Ovary (tissue), 10 donors: ENCODE measurements at regions of chr10 and their contacts with region 1.

Region 1: DNA sequence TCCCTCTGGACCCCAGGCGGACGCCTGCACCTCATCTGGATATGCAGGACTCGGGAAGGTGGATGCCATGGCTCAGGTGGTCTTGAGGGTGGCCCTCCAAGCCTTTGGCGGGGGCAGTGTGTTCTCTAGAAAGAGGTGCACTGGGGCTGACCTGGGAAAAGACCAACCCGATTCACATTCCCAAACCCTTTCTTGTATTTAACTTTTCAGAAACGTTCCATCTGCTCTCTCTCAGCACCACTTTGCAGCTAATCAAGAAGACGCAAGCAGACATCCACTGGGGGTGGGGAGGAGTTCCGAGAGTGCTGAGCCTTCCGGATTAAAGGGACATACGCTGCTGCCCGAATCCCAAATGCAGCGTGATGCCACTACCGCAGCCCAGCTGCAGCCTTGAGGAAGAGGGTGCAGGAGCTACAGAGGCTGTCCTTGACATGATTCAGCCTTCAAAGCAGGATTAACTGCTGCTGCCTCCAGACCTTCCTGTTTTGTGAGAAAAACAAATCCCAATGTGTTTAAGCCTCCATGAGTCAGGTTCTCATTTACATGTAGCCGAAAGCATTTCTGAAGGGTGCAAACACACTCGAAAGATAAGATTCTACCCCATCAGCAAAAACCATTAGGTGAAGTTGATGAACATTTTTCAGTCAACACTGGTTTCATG is 39.9 kb downstream of the RBM17 start:
- DNase-seq: peak; percentile 53 to 66 (median 62)
- H3K4me3 ChIP-seq: no peak overlapping the region
- H3K27ac ChIP-seq: peak overlapping the region in 1 of 2 donors; percentile 67
- H3K4me1 ChIP-seq: peaks cover 12% of the 10 kb centered on the region
- H3K27me3 ChIP-seq: no peaks in the 10 kb centered on the region
- CTCF ChIP-seq: no peak
- EP300 ChIP-seq: no peak
- POLR2A ChIP-seq: no peak

Region 2: GRCh38 chr10:5960070-5960972 is 168.4 kb before region 1 on chr10:
- intact Hi-C with region 1: no loop called
- DNase-seq: peak in 4 of 5 donors; percentile 4 to 17 (median 13)
- H3K4me3 ChIP-seq: no peak overlapping the region
- H3K27ac ChIP-seq: no peak overlapping the region
- H3K4me1 ChIP-seq: no peaks in the 10 kb centered on the region
- H3K27me3 ChIP-seq: no peaks in the 10 kb centered on the region
- CTCF ChIP-seq: no peak
- EP300 ChIP-seq: no peak
- POLR2A ChIP-seq: no peak

Region 3: GRCh38 chr10:6108603-6109443 is 19.9 kb before region 1 on chr10:
- intact Hi-C with region 1: loop called in 1 of 4 experiments (anchors 1 kb)
- DNase-seq: no peak
- H3K4me3 ChIP-seq: no peak overlapping the region
- H3K27ac ChIP-seq: no peak overlapping the region
- H3K4me1 ChIP-seq: no peaks in the 10 kb centered on the region
- H3K27me3 ChIP-seq: no peaks in the 10 kb centered on the region
- CTCF ChIP-seq: peak; percentile 57 to 79 (median 78)
- EP300 ChIP-seq: no peak
- POLR2A ChIP-seq: no peak

Region 4: DNA sequence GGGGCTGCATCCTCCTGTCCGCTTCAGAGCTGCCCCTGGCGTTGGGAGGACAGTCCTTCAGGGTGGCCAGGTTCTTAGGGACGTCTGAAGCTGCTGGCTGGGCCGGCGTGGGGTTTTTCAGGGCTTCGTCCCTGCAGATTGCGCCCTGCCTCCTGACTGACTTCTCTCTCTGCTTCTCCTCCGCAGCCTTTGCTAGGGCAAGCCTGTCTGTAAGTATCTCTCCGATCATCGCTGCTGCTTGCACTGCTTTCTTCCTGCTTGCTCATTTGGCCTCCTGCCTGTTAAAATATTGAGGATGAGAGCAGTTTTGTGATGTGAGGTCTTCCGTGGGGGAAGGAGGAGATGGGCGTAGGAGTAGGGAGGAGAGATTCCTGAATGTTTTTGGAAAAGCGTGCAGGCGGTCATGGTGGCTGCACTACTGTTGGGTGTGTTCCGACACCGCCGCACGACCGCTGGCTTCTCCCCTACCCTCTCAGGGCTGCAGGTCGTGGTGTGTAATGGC is 99.3 kb after region 1 on chr10:
- intact Hi-C with region 1: no loop called
- DNase-seq: peak in 1 of 5 donors; percentile 35
- H3K4me3 ChIP-seq: no peak overlapping the region
- H3K27ac ChIP-seq: no peak overlapping the region
- H3K4me1 ChIP-seq: peaks cover 9% of the 10 kb centered on the region
- H3K27me3 ChIP-seq: no peaks in the 10 kb centered on the region
- CTCF ChIP-seq: no peak
- EP300 ChIP-seq: no peak
- POLR2A ChIP-seq: no peak